ENCODE measurements at regions of chr3 and their contacts with region 1.

Region 1: DNA sequence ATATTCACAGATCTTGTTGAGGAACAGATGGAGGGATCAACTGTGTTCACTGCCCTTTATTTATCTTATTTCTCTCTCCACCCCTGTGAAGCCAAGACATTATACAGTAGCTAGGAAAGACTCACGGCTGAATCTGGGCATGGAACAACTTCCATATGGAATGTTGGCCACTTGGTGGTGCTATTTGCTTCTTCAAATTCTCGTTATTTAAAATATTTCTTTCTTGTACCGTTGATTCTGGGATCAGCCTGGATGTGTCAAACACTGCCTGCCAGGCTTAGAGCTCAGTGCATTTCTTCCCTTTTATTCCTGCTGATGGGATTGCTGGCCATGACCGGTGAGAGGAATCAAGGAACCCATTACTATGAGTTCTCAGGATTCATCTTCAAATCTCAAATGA is 17.5 kb upstream of the GASK1A start:
- DNase-seq: peak in 6 of 9 donors; percentile 11 to 50 (median 42)
- ATAC-seq: peak; percentile 45
- H3K4me3 ChIP-seq: no peak overlapping the region
- H3K4me3 Mint-ChIP-seq: no peak overlapping the region
- H3K27ac ChIP-seq: no peak overlapping the region
- H3K27ac Mint-ChIP-seq: peak overlapping the region in 2 of 9 donors; percentile 2 to 24
- H3K4me1 ChIP-seq: peaks cover 0 to 27% of the 10 kb centered on the region in 2 donors
- H3K4me1 Mint-ChIP-seq: peaks cover 0 to 38% (median 34%) of the 10 kb centered on the region in 7 donors
- H3K27me3 ChIP-seq: no peaks in the 10 kb centered on the region
- H3K27me3 Mint-ChIP-seq: peaks cover 0 to 19% (median 3%) of the 10 kb centered on the region in 5 donors

Region 2: DNA sequence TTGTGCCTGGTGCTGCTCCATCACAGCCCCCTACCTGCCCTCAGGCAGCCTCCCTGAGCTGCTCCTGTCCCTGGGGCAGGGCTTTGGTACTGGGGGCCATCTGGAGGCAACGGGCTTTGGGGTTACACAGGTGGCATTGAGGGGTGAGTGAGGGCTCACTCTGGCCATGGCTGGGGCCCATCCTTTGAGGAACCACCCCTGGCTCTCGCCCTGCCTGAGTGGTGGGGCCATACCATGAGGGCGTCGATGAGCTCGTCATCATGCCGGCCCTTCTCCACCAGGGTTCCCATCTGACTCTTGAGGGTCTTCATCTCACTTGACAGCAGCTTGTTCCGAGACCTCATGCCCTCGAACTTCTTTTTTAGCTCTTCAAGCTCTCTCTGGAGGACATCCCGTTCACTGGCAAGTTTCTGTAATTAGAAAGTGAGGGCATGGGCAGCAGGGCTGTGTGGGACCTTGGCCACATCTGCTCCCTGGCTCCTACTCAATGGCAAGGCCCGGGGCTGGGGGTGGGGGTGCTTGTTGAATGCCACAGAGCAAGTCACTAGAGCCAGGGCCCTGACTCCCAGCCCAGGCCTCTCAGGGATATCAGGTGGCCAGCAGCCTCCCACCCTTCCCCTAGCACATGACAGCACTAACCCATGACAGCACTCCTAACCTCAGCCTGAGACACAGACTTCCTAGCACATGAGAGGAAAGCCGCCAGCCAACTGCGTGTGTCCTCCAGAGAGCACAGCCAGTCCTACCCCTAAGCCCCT is 222.1 kb before region 1 on chr3:
- CTCF ChIA-PET with region 1: no interaction called
- POLR2A ChIA-PET with region 1: no interaction called
- intact Hi-C with region 1: no loop called
- DNase-seq: peak in 1 of 9 donors; percentile 13
- ATAC-seq: no peak
- H3K4me3 ChIP-seq: no peak overlapping the region
- H3K4me3 Mint-ChIP-seq: no peak overlapping the region
- H3K27ac ChIP-seq: no peak overlapping the region
- H3K27ac Mint-ChIP-seq: no peak overlapping the region
- H3K4me1 ChIP-seq: no peaks in the 10 kb centered on the region
- H3K4me1 Mint-ChIP-seq: peaks cover 0 to 9% (median 5%) of the 10 kb centered on the region in 7 donors
- H3K27me3 ChIP-seq: no peaks in the 10 kb centered on the region
- H3K27me3 Mint-ChIP-seq: peaks cover 0 to 8% (median 0%) of the 10 kb centered on the region in 5 donors

Region 3: DNA sequence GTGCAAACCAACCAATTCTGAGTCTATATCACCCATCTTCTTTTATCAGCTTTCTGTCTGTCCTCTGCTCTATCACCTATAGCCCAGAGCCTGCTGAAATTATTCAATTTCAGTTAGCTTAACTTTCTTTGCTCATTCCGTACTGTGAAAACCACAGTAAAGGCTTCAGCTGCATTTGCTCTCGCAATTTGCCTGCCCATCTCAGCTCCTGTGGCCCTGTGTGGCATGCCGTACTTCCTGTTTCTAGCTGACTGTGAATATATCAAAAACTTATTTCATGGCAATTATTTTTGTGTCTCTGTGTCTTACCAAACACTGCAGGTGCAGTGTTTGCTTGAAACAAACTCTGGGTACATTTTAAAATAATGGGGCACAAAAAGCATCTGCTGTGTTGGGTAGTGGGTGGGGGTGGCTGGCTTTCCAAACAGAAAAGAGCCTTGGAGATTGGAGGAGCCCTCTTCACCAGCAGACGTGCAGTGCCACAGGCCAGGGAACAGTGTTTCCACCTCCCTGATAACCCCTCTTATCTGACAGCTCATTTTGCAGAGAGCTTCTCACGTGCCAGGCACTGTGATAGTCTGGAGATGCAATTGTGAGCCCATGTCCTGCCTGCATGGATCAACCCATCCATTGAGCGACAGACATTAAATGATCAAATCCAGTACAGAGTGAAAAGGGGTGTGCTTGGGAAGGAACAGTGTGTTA is 62.7 kb after region 1 on chr3:
- CTCF ChIA-PET with region 1: interaction called, 8 read pairs
- POLR2A ChIA-PET with region 1: interaction called, 7 read pairs
- intact Hi-C with region 1: loop called in 1 of 2 experiments (anchors 2 kb)
- DNase-seq: peak in 7 of 9 donors; percentile 58 to 86 (median 79)
- ATAC-seq: peak; percentile 93
- H3K4me3 ChIP-seq: peak overlapping the region; percentile 33
- H3K4me3 Mint-ChIP-seq: peak overlapping the region; percentile 68 to 86 (median 82)
- H3K27ac ChIP-seq: peak overlapping the region; percentile 70
- H3K27ac Mint-ChIP-seq: peak overlapping the region in 8 of 9 donors; percentile 51 to 97 (median 92)
- H3K4me1 ChIP-seq: peaks cover 55 to 68% of the 10 kb centered on the region in 2 donors
- H3K4me1 Mint-ChIP-seq: peaks cover 9 to 88% (median 57%) of the 10 kb centered on the region in 7 donors
- H3K27me3 ChIP-seq: no peaks in the 10 kb centered on the region
- H3K27me3 Mint-ChIP-seq: peaks cover 0 to 11% (median 0%) of the 10 kb centered on the region in 5 donors

Region 4: DNA sequence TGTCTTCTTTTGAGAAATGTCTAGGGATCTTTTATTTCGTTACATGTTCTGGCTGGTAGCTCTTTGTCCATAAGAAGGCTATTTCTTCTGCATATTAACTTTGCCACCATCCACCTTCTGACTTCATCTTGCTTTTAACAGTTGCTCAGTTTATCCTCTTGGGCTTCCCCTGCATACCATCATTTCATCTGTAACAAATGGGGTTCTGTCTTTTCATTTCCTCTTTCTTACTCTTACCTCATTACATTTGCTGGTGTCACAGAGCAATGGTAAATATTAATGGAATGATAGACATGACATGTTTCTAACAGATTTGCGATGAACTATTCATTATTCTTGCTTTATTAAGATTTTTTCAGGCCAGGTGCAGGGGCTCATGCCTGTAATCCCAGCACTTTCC is 79.9 kb after region 1 on chr3:
- CTCF ChIA-PET with region 1: no interaction called
- POLR2A ChIA-PET with region 1: no interaction called
- intact Hi-C with region 1: no loop called
- DNase-seq: no peak
- ATAC-seq: no peak
- H3K4me3 ChIP-seq: no peak overlapping the region
- H3K4me3 Mint-ChIP-seq: no peak overlapping the region
- H3K27ac ChIP-seq: no peak overlapping the region
- H3K27ac Mint-ChIP-seq: no peak overlapping the region
- H3K4me1 ChIP-seq: peaks cover 4 to 8% of the 10 kb centered on the region in 2 donors
- H3K4me1 Mint-ChIP-seq: peaks cover 0 to 23% (median 14%) of the 10 kb centered on the region in 7 donors
- H3K27me3 ChIP-seq: no peaks in the 10 kb centered on the region
- H3K27me3 Mint-ChIP-seq: no peaks in the 10 kb centered on the region

Region 5: GRCh38 chr3:43087249-43087776 is 125.7 kb after region 1 on chr3:
- CTCF ChIA-PET with region 1: interaction called, 46 read pairs
- POLR2A ChIA-PET with region 1: no interaction called
- intact Hi-C with region 1: loop called in 1 of 2 experiments (anchors 1 kb)
- DNase-seq: peak in 3 of 9 donors; percentile 9 to 19 (median 17)
- ATAC-seq: no peak
- H3K4me3 ChIP-seq: no peak overlapping the region
- H3K4me3 Mint-ChIP-seq: no peak overlapping the region
- H3K27ac ChIP-seq: no peak overlapping the region
- H3K27ac Mint-ChIP-seq: no peak overlapping the region
- H3K4me1 ChIP-seq: no peaks in the 10 kb centered on the region
- H3K4me1 Mint-ChIP-seq: peaks cover 2 to 27% (median 8%) of the 10 kb centered on the region in 7 donors
- H3K27me3 ChIP-seq: no peaks in the 10 kb centered on the region
- H3K27me3 Mint-ChIP-seq: no peaks in the 10 kb centered on the region

Region 6: DNA sequence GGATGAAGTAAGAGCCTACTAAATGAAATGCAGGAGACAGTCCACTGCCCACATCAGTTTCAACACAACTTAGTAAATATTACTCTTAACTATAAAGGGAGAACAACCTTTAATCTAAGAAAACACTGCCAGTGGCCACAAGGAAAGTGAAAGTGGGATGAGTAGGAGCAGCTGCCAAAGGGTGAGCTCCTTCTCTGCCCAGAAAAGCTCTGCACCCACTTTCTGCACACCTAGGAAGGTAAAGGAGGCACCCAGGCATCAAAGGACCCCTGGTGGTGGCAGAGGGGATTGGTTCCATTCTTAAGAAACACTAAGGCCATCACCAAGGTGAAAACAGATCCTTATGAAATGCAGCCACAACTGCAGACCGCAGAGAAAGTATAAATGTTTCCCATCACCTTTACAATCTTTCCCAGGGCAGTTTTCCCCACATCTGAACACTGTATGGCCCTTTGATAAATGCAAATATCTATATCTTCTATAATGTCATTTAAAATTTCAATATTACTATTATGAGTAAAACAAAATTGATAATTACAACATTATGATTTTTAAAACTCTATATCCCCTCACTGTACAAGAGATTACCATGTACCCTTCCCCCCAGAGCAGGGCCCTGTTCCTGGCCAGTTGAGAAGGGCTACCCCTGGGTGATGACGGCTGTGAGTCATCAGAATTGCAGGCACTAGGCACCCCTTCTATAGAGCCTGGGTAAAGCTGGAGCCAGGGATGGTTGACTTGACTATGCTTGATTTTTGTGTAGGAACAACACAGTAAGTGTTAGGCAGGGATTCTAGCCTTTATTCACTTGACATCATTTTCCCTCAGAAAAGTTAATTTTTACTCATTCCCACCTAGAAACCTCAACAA is 416.7 kb after region 1 on chr3:
- CTCF ChIA-PET with region 1: interaction called, 5 read pairs
- POLR2A ChIA-PET with region 1: interaction called, 5 read pairs
- intact Hi-C with region 1: loop called in 1 of 2 experiments (anchors 1 kb)
- DNase-seq: peak; percentile 30 to 78 (median 71)
- ATAC-seq: peak; percentile 94
- H3K4me3 ChIP-seq: no peak overlapping the region
- H3K4me3 Mint-ChIP-seq: no peak overlapping the region
- H3K27ac ChIP-seq: no peak overlapping the region
- H3K27ac Mint-ChIP-seq: peak overlapping the region in 8 of 9 donors; percentile 26 to 88 (median 40)
- H3K4me1 ChIP-seq: peaks cover 6 to 10% of the 10 kb centered on the region in 2 donors
- H3K4me1 Mint-ChIP-seq: peaks cover 6 to 29% (median 19%) of the 10 kb centered on the region in 7 donors
- H3K27me3 ChIP-seq: no peaks in the 10 kb centered on the region
- H3K27me3 Mint-ChIP-seq: peaks cover 0 to 12% (median 0%) of the 10 kb centered on the region in 5 donors

Region 7: DNA sequence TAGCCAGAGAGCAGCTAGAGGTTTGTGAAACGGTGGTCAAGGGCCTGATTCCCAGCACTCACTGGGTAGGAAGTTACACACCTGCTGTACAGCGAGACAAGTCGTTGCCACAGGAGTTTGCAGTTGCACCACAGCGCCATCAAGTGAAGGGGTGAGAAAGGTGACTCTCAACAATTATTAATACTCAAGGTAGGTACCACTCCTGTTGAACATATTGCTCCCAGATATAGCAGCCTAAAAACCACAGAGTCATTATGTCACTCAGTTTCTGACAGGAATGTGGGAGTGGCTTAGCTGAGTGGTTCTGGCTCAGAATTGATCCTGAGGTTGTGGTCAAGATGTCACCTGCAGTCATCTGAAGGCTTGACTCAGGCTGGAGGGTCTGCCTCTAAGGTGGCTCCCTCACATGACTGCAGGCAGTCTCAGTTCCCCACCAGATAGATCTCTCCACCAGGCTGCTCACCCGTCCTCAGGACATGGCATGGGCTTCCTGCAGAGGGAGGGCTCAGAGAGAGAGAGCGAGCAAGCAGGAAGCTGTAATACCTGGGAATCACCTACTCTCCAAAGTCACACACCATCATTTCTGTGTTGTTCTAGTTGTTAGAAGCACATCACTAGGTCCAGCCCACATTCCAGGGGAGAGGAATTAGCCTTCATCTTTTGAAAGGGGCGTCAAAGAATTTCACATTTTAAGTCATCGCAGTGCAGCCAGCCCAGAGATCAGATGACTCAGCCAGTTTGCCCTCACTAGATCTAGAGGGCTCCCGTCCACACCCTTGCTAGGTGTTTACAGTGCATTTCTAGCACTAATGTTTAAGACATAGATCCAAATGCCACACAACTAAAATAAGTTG is 677.2 kb after region 1 on chr3:
- CTCF ChIA-PET with region 1: no interaction called
- POLR2A ChIA-PET with region 1: no interaction called
- intact Hi-C with region 1: loop called in 1 of 2 experiments (anchors 10 kb)
- DNase-seq: peak in 3 of 9 donors; percentile 7 to 12 (median 8)
- ATAC-seq: peak; percentile 45
- H3K4me3 ChIP-seq: no peak overlapping the region
- H3K4me3 Mint-ChIP-seq: no peak overlapping the region
- H3K27ac ChIP-seq: no peak overlapping the region
- H3K27ac Mint-ChIP-seq: no peak overlapping the region
- H3K4me1 ChIP-seq: no peaks in the 10 kb centered on the region
- H3K4me1 Mint-ChIP-seq: peaks cover 0 to 8% (median 0%) of the 10 kb centered on the region in 7 donors
- H3K27me3 ChIP-seq: no peaks in the 10 kb centered on the region
- H3K27me3 Mint-ChIP-seq: peaks cover 5 to 10% (median 7%) of the 10 kb centered on the region in 5 donors